Activated naive CD4-positive, alpha-beta T cell treated with anti-CD3 and anti-CD28 coated beads for 36 hours (primary cell): ENCODE measurements at regions of chr1 and their contacts with region 1.

Region 1: GRCh38 chr1:174999216-174999925 is 376 bp upstream of the CACYBP start:
- DNase-seq: peak; percentile 98
- H3K4me3 Mint-ChIP-seq: no peak overlapping the region
- H3K27ac Mint-ChIP-seq: no peak overlapping the region
- H3K4me1 Mint-ChIP-seq: peaks cover 46% of the 10 kb centered on the region
- H3K27me3 Mint-ChIP-seq: no peaks in the 10 kb centered on the region

Region 2: GRCh38 chr1:173714759-173715537 is 1284.4 kb before region 1 on chr1 and contains the start of gene KLHL20:
- CTCF ChIA-PET with region 1: no interaction called
- intact Hi-C with region 1: loop called (anchors 1 kb)
- DNase-seq: peak; percentile 91
- H3K4me3 Mint-ChIP-seq: peak within 1 kb of the TSS; percentile 97
- H3K27ac Mint-ChIP-seq: peak within 1 kb of the TSS; percentile 96
- H3K4me1 Mint-ChIP-seq: peaks cover 9% of the 10 kb centered on the region
- H3K27me3 Mint-ChIP-seq: peaks cover 15% of the 10 kb centered on the region
- total RNA-seq, gene KLHL20: 13.0 to 14.9 TPM

Region 3: DNA sequence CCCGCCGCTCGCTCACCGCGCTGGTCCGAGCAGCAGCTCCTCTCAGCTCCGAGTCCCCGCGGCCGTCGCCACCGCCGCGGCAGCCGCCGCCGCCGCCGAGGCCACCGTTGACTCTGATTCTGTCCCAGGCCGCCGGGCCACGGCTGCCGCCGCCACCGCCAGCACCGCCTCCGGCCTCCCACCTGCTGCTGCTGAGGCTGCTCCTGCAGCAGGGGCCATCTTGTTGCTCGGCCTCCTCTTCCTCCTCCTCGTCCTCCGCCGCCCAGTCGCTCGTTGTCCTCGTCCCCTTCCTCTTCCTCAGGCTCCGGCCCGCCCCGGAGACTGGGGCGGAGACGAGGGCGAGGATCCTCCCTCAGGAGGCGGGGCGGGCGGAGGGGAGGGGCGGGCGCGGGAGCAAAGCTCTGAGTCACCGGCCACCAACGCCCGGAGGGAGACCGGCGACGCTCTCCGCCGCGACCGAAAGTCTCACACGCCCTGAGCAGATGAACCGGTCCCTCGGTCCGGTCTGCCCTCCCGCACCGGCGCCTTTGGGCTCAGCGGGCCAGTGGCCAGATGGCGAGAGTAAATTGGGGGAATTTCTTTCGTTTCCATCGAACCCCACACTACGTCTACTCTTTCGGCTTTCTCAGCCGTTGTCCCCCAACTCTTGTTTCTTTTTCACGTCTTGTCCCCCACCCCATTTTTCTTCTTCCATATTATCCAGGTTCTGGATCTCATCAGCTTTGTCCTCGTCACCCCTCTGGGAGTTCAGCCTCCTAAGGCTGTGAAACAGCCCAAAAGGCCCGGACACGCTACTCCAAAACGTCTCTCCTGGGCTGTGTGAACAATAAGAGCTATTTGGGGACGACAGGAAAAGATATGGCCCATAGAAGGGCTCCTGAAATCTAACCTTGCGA is 977.0 kb before region 1 on chr1 and contains the start of gene RC3H1:
- CTCF ChIA-PET with region 1: no interaction called
- intact Hi-C with region 1: loop called (anchors 1 kb)
- DNase-seq: peak; percentile 92
- H3K4me3 Mint-ChIP-seq: peak within 1 kb of the TSS; percentile 93
- H3K27ac Mint-ChIP-seq: peak within 1 kb of the TSS; percentile 94
- H3K4me1 Mint-ChIP-seq: peaks cover 32% of the 10 kb centered on the region
- H3K27me3 Mint-ChIP-seq: no peaks in the 10 kb centered on the region
- total RNA-seq, gene RC3H1: 24.2 to 27.1 TPM

Region 4: DNA sequence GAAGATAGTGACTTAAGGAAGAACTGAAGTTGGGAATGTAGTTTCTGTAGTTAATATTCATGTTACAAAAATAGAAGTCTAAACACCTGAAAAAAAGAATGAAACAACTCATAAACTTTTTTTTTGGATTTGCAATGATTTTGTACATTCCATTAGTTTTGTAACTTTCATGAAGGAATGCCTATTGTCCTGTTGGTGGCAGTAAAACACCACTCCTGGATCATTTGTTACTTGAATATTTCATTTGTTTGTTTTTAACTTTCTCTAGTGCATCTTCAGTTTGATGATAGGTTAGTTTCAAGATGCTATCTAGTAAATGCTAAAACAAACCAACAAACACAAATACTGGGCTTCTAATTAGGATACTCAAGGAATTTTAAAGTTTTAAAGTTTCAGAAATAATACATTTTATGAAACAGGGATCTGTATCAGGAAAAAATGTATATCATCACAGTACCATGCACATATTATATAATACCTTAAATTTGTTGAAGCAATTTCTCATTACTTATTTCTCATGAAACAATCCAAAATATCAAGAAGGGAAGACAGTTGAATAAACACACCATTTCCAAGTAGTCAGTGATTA is 229.3 kb before region 1 on chr1:
- CTCF ChIA-PET with region 1: interaction called, 6 read pairs
- intact Hi-C with region 1: loop called (anchors 1 kb)
- DNase-seq: no peak
- H3K4me3 Mint-ChIP-seq: no peak overlapping the region
- H3K27ac Mint-ChIP-seq: no peak overlapping the region
- H3K4me1 Mint-ChIP-seq: peaks cover 6% of the 10 kb centered on the region
- H3K27me3 Mint-ChIP-seq: no peaks in the 10 kb centered on the region

Region 5: GRCh38 chr1:174968750-174969244 is 30.6 kb before region 1 on chr1:
- CTCF ChIA-PET with region 1: interaction called, 4 read pairs
- intact Hi-C with region 1: loop called (anchors 1 kb)
- DNase-seq: peak; percentile 49
- H3K4me3 Mint-ChIP-seq: peak overlapping the region; percentile 51
- H3K27ac Mint-ChIP-seq: peak overlapping the region; percentile 86
- H3K4me1 Mint-ChIP-seq: peaks cover 63% of the 10 kb centered on the region
- H3K27me3 Mint-ChIP-seq: no peaks in the 10 kb centered on the region

Region 6: DNA sequence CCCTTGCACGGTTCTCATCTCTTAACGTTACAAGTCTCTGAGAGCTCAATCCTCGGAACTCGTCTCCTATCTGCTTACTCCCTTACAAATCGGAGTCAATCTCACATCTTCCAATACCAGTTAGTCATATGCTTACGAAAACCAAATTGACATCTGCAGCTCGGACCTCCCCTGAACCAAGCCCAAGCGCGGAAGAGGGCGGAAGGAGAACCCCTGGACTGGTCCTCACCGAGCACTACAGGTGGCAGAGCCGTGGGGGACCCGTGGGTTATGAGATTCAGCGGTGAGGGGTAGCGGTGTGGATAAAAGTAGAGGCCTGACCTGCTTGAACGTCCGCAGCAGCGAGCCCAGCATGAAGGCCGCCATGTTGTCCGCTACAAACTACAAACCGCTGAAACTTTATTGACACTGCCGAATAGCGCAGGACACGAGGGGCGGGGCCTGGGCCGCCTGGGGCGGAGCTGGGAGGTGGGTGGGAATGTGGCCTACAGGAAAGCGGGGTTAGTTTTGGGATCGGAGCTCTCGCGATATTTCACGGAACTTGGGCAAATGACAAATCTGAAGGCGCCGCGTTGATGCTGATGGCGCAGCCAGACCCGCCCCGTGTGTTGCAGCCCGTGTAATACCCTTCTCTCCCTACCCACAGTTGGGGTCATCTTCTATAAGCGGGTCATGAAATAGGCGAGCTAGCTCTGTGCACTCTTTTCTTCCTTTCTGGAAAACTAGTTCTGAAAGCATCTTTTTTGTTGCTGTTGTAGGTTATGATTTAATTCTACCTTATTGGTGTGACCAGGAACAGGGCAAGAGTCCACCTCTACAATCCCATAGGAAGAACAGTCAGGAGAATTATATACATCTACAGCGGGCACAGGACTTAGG is 23.9 kb after region 1 on chr1 and contains the start of gene MRPS14:
- CTCF ChIA-PET with region 1: interaction called, 10 read pairs
- intact Hi-C with region 1: loop called (anchors 1 kb)
- DNase-seq: peak; percentile 100
- H3K4me3 Mint-ChIP-seq: peak within 1 kb of the TSS; percentile 87
- H3K27ac Mint-ChIP-seq: peak within 1 kb of the TSS; percentile 86
- H3K4me1 Mint-ChIP-seq: peaks cover 31% of the 10 kb centered on the region
- H3K27me3 Mint-ChIP-seq: no peaks in the 10 kb centered on the region
- total RNA-seq, gene MRPS14: 48.8 to 51.2 TPM